Vagina (tissue), 2 donors: ENCODE measurements at regions of chr20 and their contacts with region 1.

Region 1: DNA sequence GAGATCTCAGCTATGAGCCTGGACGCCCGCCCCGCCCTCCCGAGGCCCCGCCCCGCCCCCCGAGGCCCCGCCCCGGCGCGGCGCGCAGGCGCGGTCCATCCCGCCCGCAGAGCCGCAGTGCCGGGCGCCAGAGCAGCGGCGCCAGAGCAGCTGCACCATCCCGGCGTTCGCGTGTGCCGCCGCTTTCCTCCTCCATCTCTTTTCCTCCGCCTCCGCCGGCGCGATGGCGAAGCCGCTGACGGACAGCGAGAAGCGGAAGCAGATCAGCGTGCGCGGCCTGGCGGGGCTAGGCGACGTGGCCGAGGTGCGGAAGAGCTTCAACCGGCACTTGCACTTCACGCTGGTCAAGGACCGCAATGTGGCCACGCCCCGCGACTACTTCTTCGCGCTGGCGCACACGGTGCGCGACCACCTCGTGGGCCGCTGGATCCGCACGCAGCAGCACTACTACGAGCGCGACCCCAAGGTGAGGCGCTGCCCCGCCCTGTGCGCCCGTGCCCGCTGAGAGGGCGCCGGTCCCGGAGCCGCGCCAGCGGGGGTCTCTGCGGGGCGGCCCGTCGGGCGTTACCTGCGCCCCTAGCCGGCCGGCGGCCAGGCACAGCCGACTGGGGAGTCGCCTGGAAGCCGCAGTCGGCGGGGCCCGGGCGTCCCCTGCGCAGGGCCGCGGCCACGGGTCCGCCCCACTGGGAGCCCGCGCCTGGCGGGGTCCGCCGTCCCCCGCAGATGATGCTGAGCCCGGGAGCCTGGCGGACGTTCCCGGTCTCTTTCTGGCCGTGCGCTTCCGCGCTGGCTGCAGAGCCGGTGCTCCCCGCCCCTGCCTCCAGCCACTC is at the start of gene PYGB:
- DNase-seq: no peak
- H3K4me3 ChIP-seq: peak within 1 kb of the TSS; percentile 88 to 95
- H3K27ac ChIP-seq: peak within 1 kb of the TSS; percentile 89
- H3K4me1 ChIP-seq: peaks cover 50% of the 10 kb centered on the region
- H3K27me3 ChIP-seq: no peaks in the 10 kb centered on the region
- CTCF ChIP-seq: no peak
- POLR2A ChIP-seq: peak; percentile 32 to 85
- total RNA-seq, gene PYGB: 117 TPM

Region 2: DNA sequence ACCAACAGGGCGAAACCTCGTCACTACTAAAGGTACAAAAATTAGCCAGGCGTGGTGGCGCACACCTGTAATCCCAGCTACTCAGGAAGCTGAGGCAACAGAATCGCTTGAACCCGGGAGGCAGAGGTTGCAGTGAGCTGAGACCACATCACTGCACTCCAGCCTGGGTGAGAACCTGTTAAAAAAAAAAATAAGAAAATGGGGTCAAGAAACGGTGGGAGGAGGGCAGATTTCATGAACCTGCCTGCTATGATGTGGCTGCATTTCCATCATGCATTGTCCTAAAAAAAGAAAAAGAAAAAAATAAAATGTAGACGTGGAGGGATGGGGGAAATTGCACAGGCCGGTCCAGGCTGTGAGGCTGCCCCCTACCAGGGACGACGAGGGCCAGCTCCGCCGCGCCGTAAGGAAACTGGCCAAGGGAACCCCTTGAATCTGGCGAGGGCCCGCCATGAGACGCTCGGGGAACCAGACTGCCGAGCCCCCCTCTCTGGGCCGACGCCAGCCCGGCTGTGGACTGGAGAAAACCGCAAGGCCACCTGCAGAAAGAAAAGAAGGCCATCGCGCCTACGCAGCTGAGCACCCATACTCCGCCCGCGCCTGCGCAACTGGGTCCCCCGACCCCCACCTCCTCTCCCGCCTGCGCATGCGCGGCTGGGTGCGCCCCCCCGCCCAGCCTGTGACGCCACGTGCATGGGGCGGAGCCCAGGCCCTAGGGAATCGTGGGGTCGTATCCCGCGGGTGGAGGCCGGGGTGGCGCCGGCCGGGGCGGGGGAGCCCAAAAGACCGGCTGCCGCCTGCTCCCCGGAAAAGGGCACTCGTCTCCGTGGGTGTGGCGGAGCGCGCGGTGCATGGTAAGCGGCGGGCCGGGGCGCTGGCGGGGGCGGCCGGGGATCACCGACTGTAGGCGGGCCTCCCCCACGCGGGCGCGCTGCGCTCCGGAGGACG is 52.9 kb before region 1 on chr20 and contains the start of gene ENTPD6:
- intact Hi-C with region 1: loop called (anchors 10 kb)
- DNase-seq: peak in 1 of 2 donors; percentile 94
- H3K4me3 ChIP-seq: peak within 1 kb of the TSS; percentile 78 to 79
- H3K27ac ChIP-seq: peak within 1 kb of the TSS; percentile 81
- H3K4me1 ChIP-seq: peaks cover 35% of the 10 kb centered on the region
- H3K27me3 ChIP-seq: no peaks in the 10 kb centered on the region
- CTCF ChIP-seq: peak in 1 of 3 experiments; percentile 49
- POLR2A ChIP-seq: peak in 1 of 2 donors; percentile 84
- total RNA-seq, gene ENTPD6: 51.3 TPM